Activated CD4-positive, alpha-beta memory T cell treated with anti-CD3 and anti-CD28 coated beads, Interleukin-2, amount 10 ng/mL, durations not matched to agents 7 days and 5 days (primary cell): ENCODE measurements at regions of chr3 and their contacts with region 1.

Region 1: GRCh38 chr3:32973982-32974381 is 22.5 kb downstream of the CCR4 start:
- DNase-seq: peak; percentile 64
- H3K4me3 Mint-ChIP-seq: peak overlapping the region; percentile 6
- H3K27ac Mint-ChIP-seq: peak overlapping the region; percentile 90
- H3K4me1 Mint-ChIP-seq: peaks cover 60% of the 10 kb centered on the region
- H3K27me3 Mint-ChIP-seq: no peaks in the 10 kb centered on the region

Region 2: GRCh38 chr3:32960404-32961170 is 13.4 kb before region 1 on chr3:
- CTCF ChIA-PET with region 1: interaction called, 18 read pairs
- POLR2A ChIA-PET with region 1: interaction called, 40 read pairs
- DNase-seq: no peak
- H3K4me3 Mint-ChIP-seq: peak overlapping the region; percentile 27
- H3K27ac Mint-ChIP-seq: peak overlapping the region; percentile 77
- H3K4me1 Mint-ChIP-seq: peaks cover 66% of the 10 kb centered on the region
- H3K27me3 Mint-ChIP-seq: no peaks in the 10 kb centered on the region

Region 3: DNA sequence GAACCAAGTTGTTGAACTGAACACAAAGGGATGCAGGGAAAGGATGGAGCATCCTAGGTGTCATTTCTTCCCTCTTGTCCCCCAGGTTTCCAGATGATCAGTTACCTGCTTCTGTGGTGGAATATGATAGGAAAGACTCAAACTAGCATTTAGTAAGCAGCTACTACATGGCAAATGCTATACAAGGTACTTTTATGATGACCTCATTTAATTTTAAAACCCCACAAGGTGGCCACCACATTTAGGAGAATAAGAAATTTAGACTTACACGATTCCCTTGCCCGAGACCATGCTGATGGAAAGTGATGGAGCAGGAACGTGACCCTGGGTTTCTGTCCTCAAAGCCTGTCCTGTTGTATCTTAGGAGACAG is 18.3 kb after region 1 on chr3:
- CTCF ChIA-PET with region 1: interaction called, 28 read pairs
- POLR2A ChIA-PET with region 1: interaction called, 11 read pairs
- DNase-seq: no peak
- H3K4me3 Mint-ChIP-seq: peak overlapping the region; percentile 23
- H3K27ac Mint-ChIP-seq: peak overlapping the region; percentile 92
- H3K4me1 Mint-ChIP-seq: peaks cover 89% of the 10 kb centered on the region
- H3K27me3 Mint-ChIP-seq: no peaks in the 10 kb centered on the region

Region 4: DNA sequence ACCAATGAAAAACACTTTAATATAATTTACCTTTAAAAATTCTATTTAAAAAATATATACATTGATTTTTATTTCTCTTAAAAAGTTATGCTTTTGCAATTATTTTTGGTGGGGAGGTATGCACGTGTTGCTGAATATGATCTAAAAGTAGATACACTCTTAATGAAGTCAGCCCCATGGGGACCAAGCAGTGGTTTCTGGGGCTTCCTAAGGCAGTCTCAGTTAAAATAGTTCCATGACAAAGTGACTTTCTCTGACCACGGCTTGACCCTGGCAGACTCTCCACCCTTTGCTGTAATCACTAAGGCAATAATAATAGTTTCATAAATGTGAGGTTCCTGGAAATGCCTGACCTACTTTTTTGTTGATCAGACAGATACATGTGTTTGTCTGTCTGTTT is 27.9 kb after region 1 on chr3:
- CTCF ChIA-PET with region 1: interaction called, 8 read pairs
- POLR2A ChIA-PET with region 1: interaction called, 14 read pairs
- DNase-seq: no peak
- H3K4me3 Mint-ChIP-seq: no peak overlapping the region
- H3K27ac Mint-ChIP-seq: no peak overlapping the region
- H3K4me1 Mint-ChIP-seq: peaks cover 80% of the 10 kb centered on the region
- H3K27me3 Mint-ChIP-seq: no peaks in the 10 kb centered on the region

Region 5: GRCh38 chr3:33041909-33042308 is 67.9 kb after region 1 on chr3:
- CTCF ChIA-PET with region 1: interaction called, 5 read pairs
- POLR2A ChIA-PET with region 1: interaction called, 12 read pairs
- DNase-seq: no peak
- H3K4me3 Mint-ChIP-seq: no peak overlapping the region
- H3K27ac Mint-ChIP-seq: no peak overlapping the region
- H3K4me1 Mint-ChIP-seq: peaks cover 59% of the 10 kb centered on the region
- H3K27me3 Mint-ChIP-seq: no peaks in the 10 kb centered on the region

Region 6: GRCh38 chr3:33063651-33064051 is 89.7 kb after region 1 on chr3:
- CTCF ChIA-PET with region 1: interaction called, 3 read pairs
- POLR2A ChIA-PET with region 1: interaction called, 15 read pairs
- DNase-seq: peak; percentile 79
- H3K4me3 Mint-ChIP-seq: peak overlapping the region; percentile 8
- H3K27ac Mint-ChIP-seq: peak overlapping the region; percentile 93
- H3K4me1 Mint-ChIP-seq: peaks cover 83% of the 10 kb centered on the region
- H3K27me3 Mint-ChIP-seq: no peaks in the 10 kb centered on the region